Mammary epithelial cell (primary cell): ENCODE measurements at regions of chr17 and their contacts with region 1.

Region 1: GRCh38 chr17:29640413-29640812 is 17.7 kb upstream of the CORO6 start:
- DNase-seq: no peak
- H3K4me3 ChIP-seq: no peak overlapping the region
- H3K27ac ChIP-seq: peak overlapping the region; percentile 53
- H3K4me1 ChIP-seq: peaks cover 20% of the 10 kb centered on the region
- H3K27me3 ChIP-seq: no peaks in the 10 kb centered on the region
- CTCF ChIP-seq: no peak

Region 2: GRCh38 chr17:29483503-29483902 is 156.9 kb before region 1 on chr17:
- CTCF ChIA-PET with region 1: no interaction called
- dilution Hi-C with region 1: no loop called
- in situ Hi-C with region 1: no loop called
- intact Hi-C with region 1: no loop called
- DNase-seq: no peak
- H3K4me3 ChIP-seq: no peak overlapping the region
- H3K27ac ChIP-seq: no peak overlapping the region
- H3K4me1 ChIP-seq: no peaks in the 10 kb centered on the region
- H3K27me3 ChIP-seq: no peaks in the 10 kb centered on the region
- CTCF ChIP-seq: no peak

Region 3: DNA sequence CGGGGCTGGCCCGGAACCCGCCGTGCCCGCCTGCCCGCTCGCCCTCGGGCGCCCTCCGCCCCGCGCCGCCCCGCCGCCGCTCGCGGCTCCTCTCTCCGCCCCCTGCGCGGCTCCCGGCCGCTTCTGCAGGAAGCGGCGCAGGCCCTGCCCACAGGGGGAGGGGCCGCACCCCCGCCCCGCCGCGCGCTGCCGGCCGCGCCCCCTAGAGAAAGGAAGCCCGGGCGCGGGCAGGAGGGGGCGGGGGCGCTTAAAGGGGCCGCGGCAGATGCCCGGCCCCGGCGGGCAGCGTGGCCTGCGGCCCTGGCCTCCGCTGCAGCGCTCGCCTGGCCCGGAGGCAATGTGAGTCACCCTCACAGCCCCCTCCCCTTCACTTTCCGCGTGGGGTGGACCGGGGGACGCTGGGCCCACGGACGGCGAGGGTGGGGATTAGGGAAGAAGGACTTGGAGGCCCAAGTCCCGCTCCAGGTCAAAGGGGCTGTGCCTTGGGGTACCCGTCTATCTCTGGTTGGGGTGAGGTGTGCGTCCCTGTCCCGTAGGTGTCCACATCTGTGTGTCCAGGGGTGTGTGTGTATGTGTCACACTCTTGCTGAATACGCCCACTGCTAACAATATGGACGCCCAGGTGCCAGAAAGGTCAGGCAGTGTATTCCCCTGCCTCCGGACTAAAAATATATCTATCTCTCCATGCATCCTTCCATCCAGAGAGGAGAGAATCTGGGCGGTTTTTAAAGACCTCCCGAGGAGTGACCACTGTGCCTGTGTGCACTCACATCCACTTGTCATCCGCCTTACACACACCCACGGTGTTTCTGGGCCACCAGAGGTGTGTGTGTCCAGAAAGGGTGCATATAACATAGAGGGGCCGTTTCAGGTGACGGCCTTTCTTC is 50.6 kb before region 1 on chr17 and contains the start of gene GIT1:
- CTCF ChIA-PET with region 1: interaction called, 11 read pairs
- dilution Hi-C with region 1: no loop called
- in situ Hi-C with region 1: no loop called
- intact Hi-C with region 1: loop called (anchors 2 kb)
- DNase-seq: peak; percentile 81
- H3K4me3 ChIP-seq: peak within 1 kb of the TSS; percentile 59 to 91 (median 75)
- H3K27ac ChIP-seq: peak within 1 kb of the TSS; percentile 39
- H3K4me1 ChIP-seq: peaks cover 74% of the 10 kb centered on the region
- H3K27me3 ChIP-seq: no peaks in the 10 kb centered on the region
- CTCF ChIP-seq: no peak
- total RNA-seq, gene GIT1: 41.8 to 83.4 TPM

Region 4: DNA sequence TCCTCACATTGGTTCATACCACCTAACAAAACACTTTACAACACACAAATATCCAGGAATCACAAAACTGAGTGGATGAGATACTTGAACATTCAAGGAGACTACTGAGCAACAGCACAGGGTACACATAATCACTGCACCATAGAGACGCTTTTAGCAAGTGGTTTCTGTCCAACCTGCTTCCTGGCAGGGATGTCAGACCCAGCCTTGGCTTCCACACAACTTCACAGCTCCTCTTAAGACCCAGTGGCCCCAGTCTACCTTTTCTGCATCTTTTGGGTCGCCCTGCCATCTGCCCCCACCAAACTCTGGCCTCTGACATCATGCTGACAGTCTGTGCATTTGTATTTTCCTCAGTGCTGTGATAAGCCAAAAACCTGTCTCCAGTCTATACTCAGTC is 11.8 kb before region 1 on chr17:
- CTCF ChIA-PET with region 1: no interaction called
- dilution Hi-C with region 1: no loop called
- in situ Hi-C with region 1: no loop called
- intact Hi-C with region 1: no loop called
- DNase-seq: no peak
- H3K4me3 ChIP-seq: no peak overlapping the region
- H3K27ac ChIP-seq: no peak overlapping the region
- H3K4me1 ChIP-seq: peaks cover 22% of the 10 kb centered on the region
- H3K27me3 ChIP-seq: no peaks in the 10 kb centered on the region
- CTCF ChIP-seq: no peak

Region 5: GRCh38 chr17:29760761-29761696 is 120.6 kb after region 1 on chr17:
- CTCF ChIA-PET with region 1: no interaction called
- dilution Hi-C with region 1: no loop called
- in situ Hi-C with region 1: no loop called
- intact Hi-C with region 1: loop called (anchors 1 kb)
- DNase-seq: peak; percentile 82
- H3K4me3 ChIP-seq: peak overlapping the region; percentile 81 to 89 (median 85)
- H3K27ac ChIP-seq: peak overlapping the region; percentile 53
- H3K4me1 ChIP-seq: peaks cover 11% of the 10 kb centered on the region
- H3K27me3 ChIP-seq: no peaks in the 10 kb centered on the region
- CTCF ChIP-seq: no peak

Region 6: DNA sequence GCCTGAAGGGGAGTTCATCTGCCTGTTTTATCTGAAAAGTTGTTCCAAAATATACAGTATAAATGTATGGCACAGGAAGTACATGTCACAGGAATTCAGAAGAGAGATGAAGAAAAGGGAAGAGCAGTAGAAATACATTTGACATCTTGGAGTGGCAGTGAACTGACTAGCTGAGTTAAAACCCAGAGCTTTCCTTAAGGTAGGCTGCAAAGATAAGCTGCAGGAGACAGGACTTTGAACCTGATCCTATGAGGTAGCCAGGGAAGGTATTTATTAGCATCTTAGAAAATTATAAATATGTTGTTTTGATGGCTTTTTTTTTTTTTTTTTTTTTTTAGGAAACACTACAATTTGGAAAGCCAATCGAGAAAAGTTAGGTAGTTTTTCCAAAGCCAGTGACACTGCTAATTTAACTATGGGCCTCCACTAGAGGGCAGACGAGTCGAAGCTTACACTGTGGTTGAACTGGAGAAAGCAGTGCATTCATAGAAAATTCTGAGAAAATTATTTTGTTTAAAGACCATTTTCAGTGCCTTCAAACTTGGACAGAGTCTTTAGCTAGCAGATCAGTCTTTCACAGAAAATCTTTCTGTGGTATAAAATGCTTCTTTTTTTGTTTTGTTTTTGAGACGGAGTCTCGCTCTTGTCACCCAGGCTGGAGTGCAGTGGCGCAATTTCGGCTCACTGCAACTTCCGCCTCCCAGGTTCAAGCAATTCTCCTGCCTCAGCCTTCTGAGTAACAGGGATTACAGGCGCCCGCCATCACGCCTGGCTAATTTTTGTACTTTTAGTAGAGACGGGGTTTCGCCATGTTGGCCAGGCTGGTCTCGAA is 167.3 kb after region 1 on chr17:
- CTCF ChIA-PET with region 1: interaction called, 5 read pairs
- dilution Hi-C with region 1: no loop called
- in situ Hi-C with region 1: no loop called
- intact Hi-C with region 1: loop called (anchors 1 kb)
- DNase-seq: peak; percentile 34
- H3K4me3 ChIP-seq: no peak overlapping the region
- H3K27ac ChIP-seq: no peak overlapping the region
- H3K4me1 ChIP-seq: peaks cover 11% of the 10 kb centered on the region
- H3K27me3 ChIP-seq: no peaks in the 10 kb centered on the region
- CTCF ChIP-seq: peak; percentile 76 to 83

Region 7: GRCh38 chr17:30021708-30022317 is 381.4 kb after region 1 on chr17:
- CTCF ChIA-PET with region 1: no interaction called
- dilution Hi-C with region 1: no loop called
- in situ Hi-C with region 1: no loop called
- intact Hi-C with region 1: loop called (anchors 5 kb)
- DNase-seq: peak; percentile 35
- H3K4me3 ChIP-seq: no peak overlapping the region
- H3K27ac ChIP-seq: no peak overlapping the region
- H3K4me1 ChIP-seq: no peaks in the 10 kb centered on the region
- H3K27me3 ChIP-seq: no peaks in the 10 kb centered on the region
- CTCF ChIP-seq: peak; percentile 80 to 90